PC-9 (cell line): ENCODE measurements at regions of chr1 and their contacts with region 1.

Region 1: GRCh38 chr1:159891275-159892157 is 8.4 kb downstream of the CFAP45 start:
- DNase-seq: peak; percentile 75 to 85
- H3K4me3 ChIP-seq: no peak overlapping the region
- H3K27ac ChIP-seq: no peak overlapping the region
- H3K4me1 ChIP-seq: peaks cover 26% of the 10 kb centered on the region
- H3K27me3 ChIP-seq: no peaks in the 10 kb centered on the region
- CTCF ChIP-seq: peak; percentile 98

Region 2: DNA sequence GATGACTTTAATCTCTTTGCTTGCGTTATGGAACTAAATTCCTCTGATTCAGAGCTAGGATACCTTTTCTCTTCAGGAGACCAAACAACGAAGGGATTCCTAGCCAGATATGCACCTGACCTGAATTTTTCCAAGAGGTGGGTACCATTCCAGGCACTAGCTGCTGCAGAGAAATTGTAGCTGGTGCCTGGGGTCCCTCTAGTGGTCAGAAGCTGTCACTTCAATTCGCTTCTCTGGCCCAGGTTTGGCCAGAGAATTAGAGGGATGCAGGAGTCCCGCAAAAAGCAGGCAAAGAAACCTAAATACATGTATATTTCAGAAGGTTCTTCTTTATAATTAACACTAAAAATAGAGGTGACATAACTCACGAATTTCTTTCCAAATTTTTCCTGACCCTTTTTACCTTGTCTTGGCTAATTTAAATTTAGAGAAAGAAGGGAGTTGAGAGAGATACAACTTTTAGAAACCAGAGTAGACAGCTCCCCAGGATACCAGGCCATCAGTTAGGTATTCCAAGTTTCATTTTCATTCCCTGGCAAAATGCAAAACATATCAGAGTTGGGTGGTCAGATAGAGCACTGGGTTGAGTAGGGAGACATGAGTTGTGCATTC is 677.3 kb before region 1 on chr1:
- CTCF ChIA-PET with region 1: no interaction called
- POLR2A ChIA-PET with region 1: no interaction called
- intact Hi-C with region 1: loop called (anchors 2 kb)
- DNase-seq: peak in 1 of 2 experiments; percentile 31
- H3K4me3 ChIP-seq: no peak overlapping the region
- H3K27ac ChIP-seq: no peak overlapping the region
- H3K4me1 ChIP-seq: no peaks in the 10 kb centered on the region
- H3K27me3 ChIP-seq: peaks cover 47% of the 10 kb centered on the region
- CTCF ChIP-seq: peak; percentile 92

Region 3: DNA sequence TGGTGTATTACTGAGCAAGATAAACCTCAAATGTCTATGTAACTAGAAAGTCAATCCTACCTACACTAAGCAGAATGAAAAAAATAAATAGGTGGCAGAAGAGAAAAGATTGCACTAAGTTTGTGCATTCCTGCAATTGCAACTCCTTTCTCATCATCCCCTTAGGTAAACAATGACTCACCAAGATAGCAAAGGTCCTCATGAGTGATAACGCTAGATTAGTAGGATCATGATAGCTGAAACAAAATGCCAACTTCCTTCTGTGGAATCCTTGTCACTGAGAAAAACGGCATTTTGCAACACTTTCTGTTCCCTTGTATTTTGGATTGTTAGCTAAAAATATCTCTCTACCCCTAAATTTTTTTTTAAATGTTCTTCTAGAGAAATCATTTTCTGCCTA is 609.4 kb before region 1 on chr1:
- CTCF ChIA-PET with region 1: no interaction called
- POLR2A ChIA-PET with region 1: no interaction called
- intact Hi-C with region 1: no loop called
- DNase-seq: peak in 1 of 2 experiments; percentile 50
- H3K4me3 ChIP-seq: no peak overlapping the region
- H3K27ac ChIP-seq: no peak overlapping the region
- H3K4me1 ChIP-seq: no peaks in the 10 kb centered on the region; the same call in 1 of the 2 replicates
- H3K27me3 ChIP-seq: no peaks in the 10 kb centered on the region; the same call in 1 of the 2 replicates
- CTCF ChIP-seq: no peak

Region 4: DNA sequence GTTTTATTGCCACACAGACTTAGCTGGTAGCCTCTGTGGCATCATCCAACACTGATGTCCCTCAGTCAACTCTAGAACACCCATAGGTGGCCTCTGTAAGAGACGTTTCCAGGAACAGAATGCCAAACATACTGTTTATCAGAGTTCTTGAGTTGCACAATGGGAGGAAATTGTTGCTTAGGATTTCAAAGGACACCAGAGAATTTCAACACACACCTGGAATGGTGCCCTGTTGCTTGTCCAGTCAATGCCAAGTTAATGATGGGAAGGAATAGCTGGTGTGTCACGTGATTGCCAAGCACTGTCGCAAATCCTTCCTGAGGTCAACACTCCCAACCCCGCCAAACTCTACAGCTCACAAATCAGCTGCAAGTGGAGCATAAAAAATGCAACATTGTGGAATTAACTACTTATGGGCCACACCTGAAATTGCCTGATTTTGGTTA is 139.4 kb before region 1 on chr1:
- CTCF ChIA-PET with region 1: no interaction called
- POLR2A ChIA-PET with region 1: no interaction called
- intact Hi-C with region 1: no loop called
- DNase-seq: peak in 1 of 2 experiments; percentile 36
- H3K4me3 ChIP-seq: no peak overlapping the region
- H3K27ac ChIP-seq: no peak overlapping the region
- H3K4me1 ChIP-seq: no peaks in the 10 kb centered on the region
- H3K27me3 ChIP-seq: peaks cover 11% of the 10 kb centered on the region
- CTCF ChIP-seq: no peak

Region 5: DNA sequence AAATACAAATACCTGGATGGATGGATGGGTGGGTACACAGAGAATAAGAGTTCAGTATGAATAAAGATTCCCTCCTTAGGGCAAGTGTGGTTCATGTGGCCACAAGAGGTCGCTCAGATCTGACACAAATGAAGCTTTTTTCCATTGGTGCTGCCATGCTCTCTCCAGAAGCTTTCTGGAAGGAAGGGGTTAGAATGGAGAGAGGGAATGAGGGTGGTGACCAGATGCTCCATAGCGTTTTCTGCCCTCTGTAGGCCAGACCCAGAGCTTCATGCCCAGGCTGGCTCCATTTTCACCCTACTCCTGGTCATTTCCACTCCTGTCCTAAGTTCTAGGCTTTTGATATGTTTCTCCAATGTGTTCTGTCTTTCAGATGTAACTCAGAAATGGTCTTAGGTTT is 92.6 kb before region 1 on chr1:
- CTCF ChIA-PET with region 1: interaction called, 46 read pairs
- POLR2A ChIA-PET with region 1: no interaction called
- intact Hi-C with region 1: loop called (anchors 1 kb)
- DNase-seq: peak; percentile 61 to 70
- H3K4me3 ChIP-seq: no peak overlapping the region
- H3K27ac ChIP-seq: no peak overlapping the region
- H3K4me1 ChIP-seq: no peaks in the 10 kb centered on the region
- H3K27me3 ChIP-seq: peaks cover 19% of the 10 kb centered on the region
- CTCF ChIP-seq: peak; percentile 74

Region 6: DNA sequence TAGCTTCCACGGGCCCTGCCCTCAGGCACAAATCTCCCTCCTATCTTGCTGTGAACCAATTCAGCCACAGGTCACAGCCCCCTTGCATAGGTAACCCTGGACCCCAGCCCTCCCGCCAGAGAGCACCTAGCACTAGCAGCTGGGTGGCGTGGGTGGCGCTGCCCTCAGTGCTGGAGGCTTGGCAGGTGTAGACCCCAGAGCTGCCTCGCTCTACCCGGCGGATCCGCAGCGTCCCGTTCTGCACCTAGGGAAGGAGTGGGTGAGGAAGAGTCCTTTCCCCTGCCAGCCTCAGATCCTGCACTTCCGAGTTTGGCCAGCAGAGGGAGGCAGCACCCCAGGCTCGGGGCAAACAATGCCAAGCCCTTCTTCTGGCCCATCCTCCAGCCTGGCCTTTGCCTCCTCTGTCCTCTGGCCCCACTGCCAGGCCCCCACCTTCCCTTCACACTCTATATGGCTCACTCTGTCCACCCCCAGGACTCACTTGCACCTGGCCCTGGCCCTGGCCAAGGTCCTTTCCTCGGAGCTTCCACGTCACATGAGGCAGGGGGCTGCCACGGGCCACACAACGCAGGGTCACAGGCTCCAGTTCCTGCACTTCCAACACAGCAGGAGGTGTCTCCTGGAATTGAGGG is 44.9 kb after region 1 on chr1:
- CTCF ChIA-PET with region 1: no interaction called
- POLR2A ChIA-PET with region 1: interaction called, 5 read pairs
- intact Hi-C with region 1: loop called (anchors 2 kb)
- DNase-seq: peak in 1 of 2 experiments; percentile 82
- H3K4me3 ChIP-seq: no peak overlapping the region
- H3K27ac ChIP-seq: peak overlapping the region; percentile 56; the same call in 1 of the 2 replicates
- H3K4me1 ChIP-seq: peaks cover 35% of the 10 kb centered on the region
- H3K27me3 ChIP-seq: no peaks in the 10 kb centered on the region
- CTCF ChIP-seq: peak; percentile 95